HepG2 (cell line): ENCODE measurements at regions of chr1 and their contacts with region 1.

Region 1: DNA sequence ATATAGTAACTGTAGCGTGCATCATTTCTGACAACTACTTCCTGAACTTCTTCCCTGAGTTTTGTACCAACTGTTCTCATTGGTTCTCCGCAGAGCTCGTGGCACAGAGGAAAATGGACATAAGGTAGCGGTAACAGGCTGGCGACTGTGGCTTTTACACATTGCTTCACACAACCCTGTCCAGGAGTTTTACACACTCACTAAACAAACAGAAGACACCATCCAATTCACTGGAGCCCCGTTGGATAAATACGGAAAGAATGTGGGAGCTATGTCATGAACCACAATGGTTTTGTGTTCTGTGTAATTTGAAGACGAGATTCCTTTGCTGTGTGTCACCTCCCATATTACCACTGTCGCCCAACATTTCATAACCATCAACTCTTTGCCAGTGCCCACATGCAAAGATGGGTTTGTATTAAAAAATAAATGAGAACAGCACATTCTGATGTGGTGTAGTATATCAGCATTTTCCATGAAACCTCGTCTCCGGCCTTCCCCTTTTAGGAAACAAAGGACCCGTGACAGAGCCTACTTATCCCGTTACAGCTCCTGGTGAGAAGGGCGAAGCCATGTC is 47.3 kb upstream of the ENAH start:
- DNase-seq: peak; percentile 100
- ATAC-seq: peak; percentile 90
- H3K4me3 ChIP-seq: peak overlapping the region in 2 of 3 experiments; percentile 14 to 26; a peak in 2 of 6 replicates
- H3K27ac ChIP-seq: peak overlapping the region; percentile 71
- H3K4me1 ChIP-seq: peaks cover 58% of the 10 kb centered on the region
- H3K27me3 ChIP-seq: no peaks in the 10 kb centered on the region
- CTCF ChIP-seq: no peak
- EP300 ChIP-seq: peak; percentile 55 to 91; a peak in 3 of 4 replicates
- POLR2A ChIP-seq: peak in 1 of 2 experiments; percentile 48; a peak in 1 of 4 replicates
- RAD21 ChIP-seq: no peak

Region 2: DNA sequence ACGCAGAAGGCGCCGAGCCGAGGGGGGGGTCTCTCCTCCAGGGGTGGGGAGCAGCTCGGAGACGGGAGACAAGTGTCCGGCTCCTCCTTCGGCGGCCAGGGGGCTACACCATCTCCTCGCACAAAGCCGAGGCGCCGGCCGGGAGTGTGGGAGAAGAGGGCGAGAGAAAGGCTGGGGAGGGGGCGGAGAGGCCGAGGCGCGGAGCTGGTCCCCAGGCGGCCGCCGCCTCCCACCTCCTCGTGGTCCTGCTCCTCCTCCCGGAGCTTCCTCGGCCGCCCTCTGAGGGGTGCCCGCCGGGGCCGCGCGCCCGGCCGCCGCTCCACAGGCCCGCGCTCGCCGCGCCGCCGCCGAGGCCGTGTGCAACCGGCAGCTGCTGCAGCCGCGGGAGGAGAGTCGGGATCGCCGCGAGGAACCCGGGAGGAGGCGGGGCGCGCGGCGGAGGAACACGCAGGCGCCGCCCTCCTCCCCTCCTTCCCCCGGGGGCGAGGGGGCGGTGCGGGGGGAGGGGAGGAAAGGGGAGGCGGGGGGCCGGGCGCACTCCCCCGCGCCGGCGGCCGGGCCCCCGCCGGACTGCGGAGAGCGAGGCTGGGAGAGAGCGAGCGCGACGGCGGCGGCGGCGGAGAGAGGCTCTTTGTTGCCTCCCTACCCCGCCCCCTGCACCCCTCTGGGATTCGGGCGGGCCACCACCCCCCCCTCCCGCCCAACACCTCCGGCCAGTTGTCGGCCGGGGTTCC is 47.4 kb before region 1 on chr1 and contains the start of gene ENAH:
- CTCF ChIA-PET with region 1: no interaction called
- POLR2A ChIA-PET with region 1: interaction called, 15 read pairs
- in situ Hi-C with region 1: no loop called
- intact Hi-C with region 1: loop called (anchors 1 kb)
- DNase-seq: peak; percentile 49
- ATAC-seq: peak; percentile 80
- H3K4me3 ChIP-seq: peak within 1 kb of the TSS; percentile 86 to 98 (median 94)
- H3K27ac ChIP-seq: peak within 1 kb of the TSS; percentile 66
- H3K4me1 ChIP-seq: peaks cover 57% of the 10 kb centered on the region
- H3K27me3 ChIP-seq: no peaks in the 10 kb centered on the region; a peak in 1 of 5 replicates
- CTCF ChIP-seq: no peak
- EP300 ChIP-seq: no peak
- POLR2A ChIP-seq: peak in 1 of 2 experiments; percentile 60; a peak in 3 of 4 replicates
- RAD21 ChIP-seq: 0 out of 2 replicates have a peak, but pooled peaks have one; percentile 46
- total RNA-seq, gene ENAH: 58.3 and 60.2 TPM in 2 replicates

Region 3: DNA sequence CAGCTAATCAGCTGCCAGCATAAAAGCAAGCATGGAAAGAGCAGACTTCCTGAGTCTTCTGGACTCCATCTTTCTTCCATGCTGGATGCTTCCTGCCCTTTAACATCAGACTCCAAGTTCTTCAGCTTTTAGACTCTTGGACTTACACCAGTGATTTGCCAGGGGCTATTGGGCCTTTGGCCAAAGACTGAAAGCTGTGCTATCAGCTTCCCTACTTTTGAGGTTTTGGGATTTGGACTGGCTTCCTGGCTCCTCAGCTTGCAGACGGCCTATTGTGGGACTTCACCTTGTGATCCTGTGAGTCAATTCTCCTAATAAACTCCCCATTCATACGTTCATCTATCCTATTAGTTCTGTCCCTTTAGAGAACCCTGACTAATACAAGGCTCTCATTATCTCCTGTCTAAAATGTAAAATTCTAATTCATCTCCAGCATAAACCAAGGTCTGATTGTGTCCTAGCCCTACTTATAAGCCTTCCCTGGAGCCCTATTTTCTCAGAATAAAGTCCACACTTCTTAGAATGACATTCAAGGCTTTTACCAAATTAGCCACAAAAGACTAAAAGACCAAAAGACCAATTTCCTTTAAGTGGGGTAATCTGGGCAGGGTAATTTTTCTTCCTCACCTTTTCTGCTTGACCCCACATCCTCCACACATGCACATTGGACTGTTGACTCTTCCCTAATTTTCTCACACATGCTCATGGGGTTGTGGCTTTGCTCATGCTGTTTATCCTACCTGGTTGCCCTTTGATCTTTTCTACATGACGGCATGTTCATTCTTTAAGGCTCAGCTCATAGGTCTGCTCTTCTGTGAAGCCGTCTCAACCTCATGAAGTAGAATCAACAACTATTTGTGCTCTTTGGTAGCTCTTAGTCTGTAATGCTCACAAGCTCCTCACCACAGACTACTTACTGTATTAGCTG is 29.2 kb before region 1 on chr1:
- CTCF ChIA-PET with region 1: no interaction called
- POLR2A ChIA-PET with region 1: interaction called, 36 read pairs
- in situ Hi-C with region 1: no loop called
- intact Hi-C with region 1: loop called (anchors 1 kb)
- DNase-seq: peak; percentile 97
- ATAC-seq: peak; percentile 96
- H3K4me3 ChIP-seq: peak overlapping the region in 1 of 3 experiments; percentile 30; a peak in 1 of 6 replicates
- H3K27ac ChIP-seq: peak overlapping the region; percentile 63
- H3K4me1 ChIP-seq: peaks cover 27% of the 10 kb centered on the region
- H3K27me3 ChIP-seq: no peaks in the 10 kb centered on the region
- CTCF ChIP-seq: no peak
- EP300 ChIP-seq: peak; percentile 27 to 86; a peak in 3 of 4 replicates
- POLR2A ChIP-seq: peak in 1 of 2 experiments; percentile 35; a peak in 1 of 4 replicates
- RAD21 ChIP-seq: no peak

Region 4: GRCh38 chr1:225710804-225711203 is 10.6 kb after region 1 on chr1:
- CTCF ChIA-PET with region 1: no interaction called
- POLR2A ChIA-PET with region 1: interaction called, 10 read pairs
- in situ Hi-C with region 1: no loop called
- intact Hi-C with region 1: no loop called
- DNase-seq: no peak
- ATAC-seq: no peak
- H3K4me3 ChIP-seq: no peak overlapping the region
- H3K27ac ChIP-seq: no peak overlapping the region
- H3K4me1 ChIP-seq: peaks cover 30% of the 10 kb centered on the region
- H3K27me3 ChIP-seq: no peaks in the 10 kb centered on the region
- CTCF ChIP-seq: no peak
- EP300 ChIP-seq: no peak
- POLR2A ChIP-seq: no peak
- RAD21 ChIP-seq: no peak

Region 5: DNA sequence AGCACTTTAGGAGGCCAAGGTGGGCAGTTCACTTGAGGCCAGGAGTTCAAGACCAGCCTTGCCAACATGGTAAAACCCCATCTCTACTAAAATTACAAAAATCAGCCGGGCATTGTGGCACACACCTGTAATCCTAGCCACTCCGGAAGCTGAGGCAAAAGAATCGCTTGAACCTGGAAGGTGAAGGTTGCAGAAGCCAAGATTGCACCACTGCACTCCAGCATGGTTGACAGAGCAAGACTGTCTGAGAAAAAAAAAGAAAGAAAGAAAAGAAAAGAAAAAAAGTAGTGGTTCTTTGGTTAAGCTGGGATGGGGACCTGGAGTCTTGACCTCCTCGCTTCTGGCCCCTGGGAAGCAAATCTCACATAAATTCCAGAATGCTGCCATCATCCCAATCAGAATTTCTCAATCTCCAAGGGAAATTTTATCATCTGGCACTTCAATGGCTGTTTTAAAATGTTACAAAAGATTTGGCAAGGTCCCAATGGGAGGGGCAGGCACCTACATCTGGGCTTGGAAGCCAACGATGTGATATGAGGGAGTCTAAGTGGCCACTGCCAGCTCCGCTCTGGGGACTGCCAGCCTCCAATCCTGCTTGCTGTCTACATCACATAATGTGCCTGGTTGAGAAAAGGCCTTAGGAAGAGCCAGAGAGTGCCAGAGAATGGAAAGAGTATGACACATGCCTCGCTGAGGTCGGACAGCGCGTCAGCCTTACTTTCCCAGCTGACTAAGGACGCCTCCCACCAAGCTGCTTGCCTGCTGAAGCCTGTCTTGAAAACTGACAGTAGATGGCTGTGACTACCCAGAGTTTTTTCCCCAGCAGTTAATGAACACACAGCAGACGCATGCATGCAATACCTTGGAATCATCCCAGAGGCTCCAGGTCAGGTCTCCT is 35.2 kb after region 1 on chr1:
- CTCF ChIA-PET with region 1: no interaction called
- POLR2A ChIA-PET with region 1: interaction called, 12 read pairs
- in situ Hi-C with region 1: no loop called
- intact Hi-C with region 1: loop called (anchors 5 kb)
- DNase-seq: peak; percentile 72
- ATAC-seq: peak; percentile 87
- H3K4me3 ChIP-seq: peak overlapping the region; percentile 6 to 53 (median 35); a peak in 3 of 6 replicates
- H3K27ac ChIP-seq: no peak overlapping the region
- H3K4me1 ChIP-seq: peaks cover 67% of the 10 kb centered on the region
- H3K27me3 ChIP-seq: peaks cover 0 to 5% of the 10 kb centered on the region in 2 experiments; a peak in 1 of 5 replicates
- CTCF ChIP-seq: peak; percentile 43
- EP300 ChIP-seq: no peak
- POLR2A ChIP-seq: no peak
- RAD21 ChIP-seq: no peak

Region 6: GRCh38 chr1:225746361-225747179 is 46.3 kb after region 1 on chr1:
- CTCF ChIA-PET with region 1: no interaction called
- POLR2A ChIA-PET with region 1: interaction called, 15 read pairs
- in situ Hi-C with region 1: no loop called
- intact Hi-C with region 1: no loop called
- DNase-seq: peak; percentile 85
- ATAC-seq: peak; percentile 98
- H3K4me3 ChIP-seq: peak overlapping the region; percentile 65 to 72 (median 66); a peak in 5 of 6 replicates
- H3K27ac ChIP-seq: peak overlapping the region; percentile 60
- H3K4me1 ChIP-seq: peaks cover 52% of the 10 kb centered on the region
- H3K27me3 ChIP-seq: no peaks in the 10 kb centered on the region
- CTCF ChIP-seq: peak; percentile 39; the same call in 1 of the 2 replicates
- EP300 ChIP-seq: no peak
- POLR2A ChIP-seq: peak in 1 of 2 experiments; percentile 60; a peak in 2 of 4 replicates
- RAD21 ChIP-seq: no peak

Region 7: DNA sequence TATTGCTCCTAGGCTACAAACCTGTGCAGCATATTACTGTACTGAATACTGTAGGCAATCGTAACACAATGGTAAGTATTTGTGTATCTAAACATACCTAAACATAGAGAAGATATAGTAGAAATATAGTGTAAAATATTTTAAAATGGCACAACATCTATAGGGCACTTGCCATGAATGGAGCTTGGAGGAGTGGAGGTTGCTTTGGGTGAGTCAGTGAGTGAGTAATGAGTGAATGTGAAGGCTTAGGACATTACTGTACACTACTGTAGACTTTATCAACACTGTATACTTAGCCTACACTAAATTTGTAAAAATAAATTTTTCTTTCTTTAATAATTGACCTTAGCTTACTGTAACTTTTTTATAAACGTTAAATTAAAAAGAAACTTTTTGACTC is 232.8 kb after region 1 on chr1:
- CTCF ChIA-PET with region 1: no interaction called
- POLR2A ChIA-PET with region 1: no interaction called
- in situ Hi-C with region 1: no loop called
- intact Hi-C with region 1: no loop called
- DNase-seq: no peak
- ATAC-seq: no peak
- H3K4me3 ChIP-seq: no peak overlapping the region
- H3K27ac ChIP-seq: no peak overlapping the region
- H3K4me1 ChIP-seq: peaks cover 25% of the 10 kb centered on the region
- H3K27me3 ChIP-seq: no peaks in the 10 kb centered on the region
- CTCF ChIP-seq: no peak
- EP300 ChIP-seq: no peak
- POLR2A ChIP-seq: no peak
- RAD21 ChIP-seq: no peak